Vagina (tissue), 2 donors: ENCODE measurements at regions of chr1 and their contacts with region 1.

Region 1: GRCh38 chr1:234722904-234723720 is 113.1 kb upstream of the IRF2BP2 start:
- DNase-seq: peak in 1 of 2 donors; percentile 97
- H3K4me3 ChIP-seq: peak overlapping the region; percentile 4 to 9
- H3K27ac ChIP-seq: peak overlapping the region; percentile 91
- H3K4me1 ChIP-seq: peaks cover 85% of the 10 kb centered on the region
- H3K27me3 ChIP-seq: no peaks in the 10 kb centered on the region
- CTCF ChIP-seq: no peak
- POLR2A ChIP-seq: no peak

Region 2: DNA sequence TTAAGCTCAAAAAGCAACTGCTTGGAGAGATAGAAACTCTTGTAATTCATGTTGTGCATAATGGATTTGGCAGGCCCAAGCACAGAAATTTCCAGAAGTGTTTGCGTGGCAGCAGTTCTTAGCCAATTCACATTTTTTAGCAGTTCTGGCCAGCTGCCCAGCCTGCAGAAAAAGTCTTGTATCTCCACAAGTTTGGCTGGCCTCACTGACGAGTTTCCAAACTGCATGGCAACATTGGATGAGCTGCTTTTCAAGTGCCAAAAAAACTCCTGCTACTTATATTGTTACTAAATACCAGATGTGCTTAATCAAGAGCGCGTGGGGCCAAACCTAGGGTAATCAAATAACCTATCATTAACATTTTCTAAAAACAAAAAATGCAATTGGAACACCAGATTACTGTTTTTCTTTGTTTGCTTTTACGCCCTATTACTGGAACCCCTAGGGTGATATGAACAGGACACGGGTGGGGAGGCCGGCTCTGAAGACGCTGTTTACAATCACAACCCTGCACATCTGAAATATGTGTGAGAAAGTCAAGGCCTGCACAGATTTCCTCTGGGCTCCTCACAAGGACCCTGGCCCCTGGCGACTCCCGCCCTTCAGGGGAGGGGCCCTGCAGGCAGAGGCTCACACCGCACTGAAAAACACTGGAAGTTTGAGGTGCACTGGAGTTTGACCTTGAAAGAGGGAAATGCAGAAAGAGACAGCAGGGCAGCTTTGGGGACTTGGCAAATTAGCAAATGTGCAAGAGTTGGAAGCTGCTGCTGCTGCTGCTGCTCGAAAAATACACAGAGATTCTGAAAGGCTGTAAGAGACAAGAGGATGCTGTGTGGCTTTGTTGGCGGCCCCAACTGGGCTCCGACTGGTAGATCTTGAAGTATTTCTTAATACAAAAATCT is 188.9 kb before region 1 on chr1:
- intact Hi-C with region 1: loop called (anchors 2 kb)
- DNase-seq: peak in 1 of 2 donors; percentile 98
- H3K4me3 ChIP-seq: no peak overlapping the region
- H3K27ac ChIP-seq: peak overlapping the region; percentile 98
- H3K4me1 ChIP-seq: peaks cover 93% of the 10 kb centered on the region
- H3K27me3 ChIP-seq: no peaks in the 10 kb centered on the region
- CTCF ChIP-seq: no peak
- POLR2A ChIP-seq: no peak

Region 3: DNA sequence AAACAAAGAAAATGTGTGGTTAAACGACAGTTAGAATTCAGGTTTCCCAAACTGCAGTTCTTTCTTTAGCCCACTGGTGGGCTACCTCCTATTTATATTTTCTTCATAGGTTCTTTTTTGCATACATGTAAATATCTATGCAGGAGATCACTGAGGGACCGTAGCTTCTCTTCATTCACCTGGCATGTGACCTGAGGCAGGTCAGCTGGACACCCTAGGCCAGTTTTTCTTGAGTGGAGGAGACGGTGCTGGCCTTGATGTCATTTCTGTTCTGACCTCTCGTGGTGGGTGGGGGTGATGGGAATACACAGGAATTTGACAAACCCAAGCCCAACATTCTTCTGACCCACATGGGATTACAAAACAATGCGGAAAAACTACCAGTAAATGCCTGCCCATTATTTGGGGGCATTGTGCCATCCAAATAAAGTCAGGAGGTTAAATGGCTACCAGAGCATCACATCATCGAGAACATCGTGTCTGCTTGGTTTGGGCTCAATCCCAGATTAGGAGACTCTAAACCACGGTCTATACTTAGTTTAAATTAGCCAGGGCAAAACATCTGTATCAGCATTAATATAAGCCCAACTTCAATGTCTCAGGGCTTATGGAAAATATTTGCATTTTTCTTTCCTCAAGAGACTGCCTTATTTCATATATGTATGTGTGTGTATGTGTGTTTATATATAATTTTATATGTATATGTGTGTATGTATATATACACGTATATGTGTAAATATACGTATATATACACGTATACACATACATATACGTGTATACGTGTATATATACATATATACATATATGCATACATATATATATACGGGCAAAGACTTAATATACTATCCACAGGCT is 105.8 kb before region 1 on chr1:
- intact Hi-C with region 1: no loop called
- DNase-seq: no peak
- H3K4me3 ChIP-seq: no peak overlapping the region
- H3K27ac ChIP-seq: peak overlapping the region; percentile 9
- H3K4me1 ChIP-seq: peaks cover 55% of the 10 kb centered on the region
- H3K27me3 ChIP-seq: no peaks in the 10 kb centered on the region
- CTCF ChIP-seq: no peak
- POLR2A ChIP-seq: no peak

Region 4: DNA sequence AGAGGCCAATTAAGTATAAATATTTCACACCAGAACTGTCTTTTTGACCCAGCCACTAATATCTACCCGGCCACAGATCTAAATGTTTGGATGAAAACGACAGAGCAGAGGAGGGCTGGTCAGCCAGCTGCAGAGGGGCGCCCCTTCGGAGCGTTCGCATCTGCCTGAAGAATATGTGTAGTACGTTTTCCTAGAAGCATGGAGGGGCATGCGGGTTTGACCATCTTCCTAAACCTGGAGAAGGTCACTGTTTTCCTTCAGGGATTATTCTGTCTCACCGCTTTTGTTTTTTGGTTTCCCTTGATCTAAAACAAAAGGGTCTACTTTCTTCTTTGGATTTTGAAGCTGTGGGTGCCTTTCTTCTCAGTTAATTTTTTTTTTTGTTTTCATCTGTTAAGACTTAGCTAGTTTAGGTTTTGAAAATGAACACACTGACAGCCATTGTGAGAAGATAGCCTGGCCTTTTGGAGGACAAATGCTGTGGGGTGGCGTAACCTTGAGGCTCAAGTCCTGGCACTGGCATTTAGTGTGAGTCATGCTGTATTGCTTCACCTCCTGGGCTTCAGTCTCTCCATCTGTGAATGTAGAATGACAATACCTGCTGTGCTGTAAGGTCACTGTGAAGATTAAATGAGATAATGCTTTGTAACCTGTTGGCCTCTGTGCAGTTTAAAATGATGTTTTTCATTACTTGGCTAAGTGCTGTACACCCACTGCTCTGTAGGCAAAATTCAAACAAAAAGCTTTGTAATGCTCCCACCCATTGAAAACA is 39.1 kb before region 1 on chr1:
- intact Hi-C with region 1: loop called (anchors 2 kb)
- DNase-seq: peak in 1 of 2 donors; percentile 89
- H3K4me3 ChIP-seq: no peak overlapping the region
- H3K27ac ChIP-seq: peak overlapping the region; percentile 26
- H3K4me1 ChIP-seq: peaks cover 20% of the 10 kb centered on the region
- H3K27me3 ChIP-seq: no peaks in the 10 kb centered on the region
- CTCF ChIP-seq: no peak
- POLR2A ChIP-seq: no peak

Region 5: DNA sequence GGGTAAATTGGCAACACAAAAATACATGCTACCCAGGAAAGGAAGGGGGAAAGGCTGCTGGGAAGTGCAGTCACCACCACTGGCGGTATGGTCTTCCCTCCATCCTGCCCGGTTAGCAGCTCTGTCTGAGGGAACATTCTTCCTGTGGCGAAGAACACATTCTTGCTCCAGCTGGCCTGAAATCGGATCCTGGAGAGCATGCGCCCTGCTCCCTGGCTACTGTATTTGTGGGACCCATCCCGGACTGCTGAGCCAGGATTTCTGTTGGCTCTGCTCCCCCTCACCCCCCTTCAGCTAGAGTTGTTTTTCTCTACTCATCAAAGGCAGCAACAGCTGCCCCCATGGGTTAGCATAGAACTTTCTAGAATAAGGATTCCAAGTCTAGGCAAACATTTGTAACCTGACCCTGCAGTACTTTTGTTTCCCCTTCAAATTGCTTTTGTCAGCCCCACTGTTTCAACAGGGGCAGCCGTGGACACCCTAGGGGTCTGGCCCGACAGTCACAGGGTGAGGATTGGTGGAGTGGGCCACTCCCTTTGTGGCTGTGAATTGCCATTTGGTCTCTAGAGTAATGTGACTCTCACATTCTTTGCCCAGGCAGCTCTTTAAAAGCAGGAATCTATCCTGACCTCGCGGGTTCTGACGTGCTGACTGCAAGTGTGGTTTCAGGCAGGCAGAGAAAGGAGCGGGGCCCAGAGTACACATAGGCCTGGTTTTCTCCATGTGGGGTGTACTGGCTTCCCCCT is 247.8 kb after region 1 on chr1:
- intact Hi-C with region 1: loop called (anchors 5 kb)
- DNase-seq: peak in 1 of 2 donors; percentile 94
- H3K4me3 ChIP-seq: no peak overlapping the region
- H3K27ac ChIP-seq: peak overlapping the region; percentile 89
- H3K4me1 ChIP-seq: peaks cover 55% of the 10 kb centered on the region
- H3K27me3 ChIP-seq: no peaks in the 10 kb centered on the region
- CTCF ChIP-seq: no peak
- POLR2A ChIP-seq: no peak